WTC11 (cell line): ENCODE measurements at regions of chr14 and their contacts with region 1.

Region 1: GRCh38 chr14:31420319-31421111 is at the start of gene HEATR5A:
- DNase-seq: peak; percentile 96
- ATAC-seq: peak; percentile 93
- H3K4me3 Mint-ChIP-seq: peak within 1 kb of the TSS; percentile 90
- H3K27ac Mint-ChIP-seq: peak within 1 kb of the TSS; percentile 91
- H3K4me1 Mint-ChIP-seq: peaks cover 20% of the 10 kb centered on the region
- H3K27me3 Mint-ChIP-seq: no peaks in the 10 kb centered on the region
- CTCF ChIP-seq: no peak
- total RNA-seq, gene HEATR5A: 29.6 to 36.2 TPM (median 31.6 TPM) in 3 replicates

Region 2: GRCh38 chr14:31300296-31300695 is 120.2 kb before region 1 on chr14:
- CTCF ChIA-PET with region 1: no interaction called
- POLR2A ChIA-PET with region 1: no interaction called
- DNase-seq: no peak
- ATAC-seq: peak; percentile 89
- H3K4me3 Mint-ChIP-seq: no peak overlapping the region
- H3K27ac Mint-ChIP-seq: no peak overlapping the region
- H3K4me1 Mint-ChIP-seq: peaks cover 11% of the 10 kb centered on the region
- H3K27me3 Mint-ChIP-seq: no peaks in the 10 kb centered on the region
- CTCF ChIP-seq: no peak

Region 3: DNA sequence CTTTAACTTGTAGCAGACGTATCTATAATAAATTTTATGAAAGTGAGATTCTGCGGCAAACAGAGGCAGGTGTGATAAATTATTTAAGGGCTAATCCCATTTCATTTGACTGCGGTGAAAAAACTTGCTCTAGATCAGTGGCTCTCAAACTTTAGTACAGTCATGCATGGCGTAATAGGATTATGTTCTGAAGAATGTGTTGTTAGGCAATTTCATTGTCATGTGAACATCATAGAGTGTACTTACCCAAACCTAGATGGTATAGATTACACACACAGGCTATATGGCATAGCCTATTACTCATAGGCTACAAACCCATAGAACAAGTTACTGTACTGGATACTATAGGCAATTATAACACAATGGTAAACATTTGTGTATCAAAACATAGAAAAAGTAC is 83.9 kb before region 1 on chr14:
- CTCF ChIA-PET with region 1: no interaction called
- POLR2A ChIA-PET with region 1: no interaction called
- DNase-seq: no peak
- ATAC-seq: no peak
- H3K4me3 Mint-ChIP-seq: no peak overlapping the region
- H3K27ac Mint-ChIP-seq: no peak overlapping the region
- H3K4me1 Mint-ChIP-seq: no peaks in the 10 kb centered on the region
- H3K27me3 Mint-ChIP-seq: no peaks in the 10 kb centered on the region
- CTCF ChIP-seq: no peak

Region 4: GRCh38 chr14:31360919-31361662 is 59.4 kb before region 1 on chr14:
- CTCF ChIA-PET with region 1: no interaction called
- POLR2A ChIA-PET with region 1: no interaction called
- DNase-seq: no peak
- ATAC-seq: no peak
- H3K4me3 Mint-ChIP-seq: no peak overlapping the region
- H3K27ac Mint-ChIP-seq: no peak overlapping the region
- H3K4me1 Mint-ChIP-seq: no peaks in the 10 kb centered on the region
- H3K27me3 Mint-ChIP-seq: no peaks in the 10 kb centered on the region
- CTCF ChIP-seq: no peak

Region 5: GRCh38 chr14:31371646-31372045 is 48.9 kb before region 1 on chr14:
- CTCF ChIA-PET with region 1: no interaction called
- POLR2A ChIA-PET with region 1: no interaction called
- DNase-seq: no peak
- ATAC-seq: no peak
- H3K4me3 Mint-ChIP-seq: no peak overlapping the region
- H3K27ac Mint-ChIP-seq: no peak overlapping the region
- H3K4me1 Mint-ChIP-seq: no peaks in the 10 kb centered on the region
- H3K27me3 Mint-ChIP-seq: no peaks in the 10 kb centered on the region
- CTCF ChIP-seq: no peak

Region 6: DNA sequence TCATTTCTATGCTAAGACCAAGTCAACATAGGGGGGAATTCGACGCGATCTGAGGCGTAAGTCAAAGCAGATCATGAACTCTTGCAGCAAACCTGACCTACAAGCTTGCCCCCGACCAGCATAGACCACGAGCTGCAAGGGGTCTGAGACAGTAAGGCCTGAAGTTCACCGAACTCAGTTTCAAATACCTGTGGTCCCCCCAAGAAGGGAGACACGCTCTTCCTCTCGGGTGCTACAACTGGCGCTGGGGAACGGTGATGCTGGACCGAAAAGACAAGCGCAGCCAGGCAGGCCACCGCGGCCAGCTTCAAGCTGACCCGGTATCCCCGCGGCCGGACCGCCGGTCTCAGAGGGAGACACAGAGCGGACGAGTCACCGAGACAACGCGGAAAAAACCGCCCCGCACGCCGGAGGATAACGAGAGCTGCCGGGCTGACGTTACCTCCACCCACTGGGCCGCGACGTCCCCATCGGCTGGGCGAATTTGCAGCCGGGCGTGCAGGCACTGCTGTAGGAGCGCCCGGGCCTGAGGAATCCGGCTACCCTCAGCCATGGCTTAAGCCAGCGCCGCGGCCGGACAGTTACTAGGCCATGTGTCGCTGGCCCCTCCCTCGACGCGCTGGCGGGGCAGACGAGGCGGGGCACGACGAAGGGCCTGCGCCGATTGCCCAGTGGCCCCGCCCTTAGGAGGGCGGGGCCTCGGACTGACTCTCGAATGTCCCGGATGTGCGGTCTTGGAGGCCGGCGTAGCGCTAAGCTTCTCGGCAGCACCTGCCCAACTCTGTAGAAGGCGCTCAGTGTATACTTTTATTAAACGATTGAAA is 36.5 kb after region 1 on chr14 and contains the start of gene DTD2:
- CTCF ChIA-PET with region 1: interaction called, 4 read pairs
- POLR2A ChIA-PET with region 1: interaction called, 15 read pairs
- DNase-seq: peak; percentile 93
- ATAC-seq: peak; percentile 99
- H3K4me3 Mint-ChIP-seq: peak within 1 kb of the TSS; percentile 93
- H3K27ac Mint-ChIP-seq: peak within 1 kb of the TSS; percentile 96
- H3K4me1 Mint-ChIP-seq: peaks cover 21% of the 10 kb centered on the region
- H3K27me3 Mint-ChIP-seq: no peaks in the 10 kb centered on the region
- CTCF ChIP-seq: no peak
- total RNA-seq, gene DTD2: 16.7 to 18.5 TPM (median 17.9 TPM) in 3 replicates